ENCODE measurements at regions of chr1 and their contacts with region 1.

Region 1: DNA sequence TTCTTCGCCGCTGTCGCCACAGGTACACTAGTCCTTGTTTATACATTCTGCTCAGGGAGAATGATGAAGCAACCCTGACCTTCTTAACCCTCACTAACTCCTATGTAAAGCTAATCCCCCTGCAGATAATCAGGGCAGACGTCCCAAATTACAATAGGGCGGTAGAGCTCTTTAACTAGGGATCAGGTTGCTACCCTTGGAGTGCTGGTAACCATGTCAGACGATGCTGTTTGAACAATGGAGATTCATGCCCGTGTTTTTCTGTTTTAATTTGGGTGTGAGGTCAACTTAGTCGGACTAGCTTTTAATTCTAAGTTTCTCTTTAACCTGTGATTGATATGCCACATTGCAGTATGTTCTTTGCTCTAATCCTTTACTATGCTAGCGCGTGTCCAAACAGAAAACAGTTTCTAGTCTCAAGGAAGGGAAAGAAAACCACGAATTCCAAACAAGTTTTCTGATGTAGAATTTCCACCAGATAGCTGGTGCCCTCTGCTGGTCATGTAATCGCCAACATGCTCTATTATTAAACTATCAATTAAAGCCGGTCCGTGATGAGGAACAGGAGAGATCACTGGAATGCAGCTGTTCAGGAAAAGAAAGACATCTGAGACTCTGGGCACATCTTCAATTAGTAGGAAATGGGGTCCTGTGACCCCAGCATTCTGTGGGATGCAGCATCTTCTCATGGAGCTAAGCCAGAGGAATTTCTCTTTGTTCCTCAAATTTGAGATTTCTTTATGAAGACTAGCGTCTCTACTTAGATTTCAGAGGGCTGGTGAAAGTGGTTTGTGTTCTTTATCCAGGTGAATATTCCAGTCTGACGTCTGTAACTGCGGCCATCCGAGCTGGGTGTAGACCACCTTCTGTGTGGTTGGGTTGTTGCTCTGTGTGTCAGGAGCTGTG is 18.3 kb upstream of the VAMP3 start:
- DNase-seq: peak; percentile 11 to 64 (median 37)
- H3K4me3 ChIP-seq: no peak overlapping the region
- H3K4me3 Mint-ChIP-seq: peak overlapping the region in 6 of 7 donors; percentile 33 to 71 (median 49)
- H3K27ac ChIP-seq: no peak overlapping the region
- H3K27ac Mint-ChIP-seq: peak overlapping the region in 2 of 8 donors; percentile 16 to 54
- H3K4me1 ChIP-seq: peaks cover 4% of the 10 kb centered on the region
- H3K4me1 Mint-ChIP-seq: peaks cover 27 to 43% (median 39%) of the 10 kb centered on the region in 3 donors
- H3K27me3 ChIP-seq: no peaks in the 10 kb centered on the region
- H3K27me3 Mint-ChIP-seq: peaks cover 4 to 5% of the 10 kb centered on the region in 2 donors

Region 2: GRCh38 chr1:7672864-7673263 is 79.9 kb before region 1 on chr1:
- CTCF ChIA-PET with region 1: interaction called, 214 read pairs
- POLR2A ChIA-PET with region 1: interaction called, 3 read pairs
- DNase-seq: no peak
- H3K4me3 ChIP-seq: no peak overlapping the region
- H3K4me3 Mint-ChIP-seq: peak overlapping the region in 4 of 7 donors; percentile 41 to 51 (median 47)
- H3K27ac ChIP-seq: no peak overlapping the region
- H3K27ac Mint-ChIP-seq: peak overlapping the region in 2 of 8 donors; percentile 33 to 36
- H3K4me1 ChIP-seq: no peaks in the 10 kb centered on the region
- H3K4me1 Mint-ChIP-seq: peaks cover 0 to 23% (median 11%) of the 10 kb centered on the region in 3 donors
- H3K27me3 ChIP-seq: no peaks in the 10 kb centered on the region
- H3K27me3 Mint-ChIP-seq: peaks cover 6 to 8% of the 10 kb centered on the region in 2 donors

Region 3: DNA sequence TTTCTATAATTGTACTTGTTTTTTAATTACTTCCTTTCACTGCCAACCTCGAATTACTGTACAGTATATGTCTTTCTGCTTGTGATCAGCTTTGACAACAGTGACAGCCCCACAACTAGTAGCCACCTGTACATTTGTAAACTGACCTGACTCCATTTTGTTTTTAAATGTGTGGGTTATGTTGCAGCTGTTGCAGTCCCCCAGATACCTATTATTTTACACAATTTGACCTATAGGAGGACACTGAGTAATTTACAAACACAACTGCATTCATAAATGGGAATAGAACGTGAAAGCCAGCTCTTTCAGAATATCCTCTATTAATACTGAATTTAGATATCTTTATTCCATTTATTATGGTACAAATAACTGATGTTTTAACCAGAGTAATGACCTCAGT is 15.8 kb after region 1 on chr1:
- CTCF ChIA-PET with region 1: interaction called, 11 read pairs
- POLR2A ChIA-PET with region 1: interaction called, 3 read pairs
- DNase-seq: no peak
- H3K4me3 ChIP-seq: no peak overlapping the region
- H3K4me3 Mint-ChIP-seq: peak overlapping the region in 1 of 7 donors; percentile 91
- H3K27ac ChIP-seq: no peak overlapping the region
- H3K27ac Mint-ChIP-seq: peak overlapping the region in 1 of 8 donors; percentile 23
- H3K4me1 ChIP-seq: peaks cover 18% of the 10 kb centered on the region
- H3K4me1 Mint-ChIP-seq: peaks cover 14 to 29% (median 25%) of the 10 kb centered on the region in 3 donors
- H3K27me3 ChIP-seq: no peaks in the 10 kb centered on the region
- H3K27me3 Mint-ChIP-seq: peaks cover 2 to 10% of the 10 kb centered on the region in 2 donors

Region 4: DNA sequence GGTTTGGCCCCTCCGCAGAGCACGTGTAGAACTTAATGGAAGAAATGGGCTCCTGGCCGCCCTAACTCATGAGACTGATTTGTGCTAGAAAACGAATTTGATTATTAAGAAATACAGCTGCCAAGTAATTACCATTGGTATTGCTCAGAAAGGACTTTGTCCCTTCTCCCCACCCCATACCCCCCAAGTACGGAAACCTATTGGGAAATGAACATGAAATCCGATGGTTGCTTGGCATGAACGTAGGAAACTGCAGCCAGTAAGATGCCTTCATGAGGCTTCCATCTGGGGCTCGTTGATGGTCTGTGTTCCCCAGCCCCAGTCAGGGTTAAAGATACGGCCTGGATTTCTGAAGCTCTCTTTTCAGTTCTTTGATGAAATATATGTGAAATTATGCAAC is 52.7 kb after region 1 on chr1:
- CTCF ChIA-PET with region 1: no interaction called
- POLR2A ChIA-PET with region 1: no interaction called
- DNase-seq: no peak
- H3K4me3 ChIP-seq: no peak overlapping the region
- H3K4me3 Mint-ChIP-seq: no peak overlapping the region
- H3K27ac ChIP-seq: no peak overlapping the region
- H3K27ac Mint-ChIP-seq: peak overlapping the region in 1 of 8 donors; percentile 14
- H3K4me1 ChIP-seq: no peaks in the 10 kb centered on the region
- H3K4me1 Mint-ChIP-seq: no peaks in the 10 kb centered on the region
- H3K27me3 ChIP-seq: no peaks in the 10 kb centered on the region
- H3K27me3 Mint-ChIP-seq: no peaks in the 10 kb centered on the region